ENCODE measurements at regions of chr6 and their contacts with region 1.

Region 1: GRCh38 chr6:25992413-25993037 is 29.9 kb downstream of the TRIM38 start:
- DNase-seq: peak; percentile 95
- H3K4me3 Mint-ChIP-seq: peak overlapping the region; percentile 96
- H3K27ac Mint-ChIP-seq: peak overlapping the region; percentile 89
- H3K4me1 Mint-ChIP-seq: peaks cover 18% of the 10 kb centered on the region
- H3K27me3 Mint-ChIP-seq: no peaks in the 10 kb centered on the region

Region 2: GRCh38 chr6:25717866-25718740 is 274.4 kb before region 1 on chr6:
- CTCF ChIA-PET with region 1: interaction called, 24 read pairs
- POLR2A ChIA-PET with region 1: no interaction called
- intact Hi-C with region 1: loop called (anchors 5 kb)
- DNase-seq: no peak
- H3K4me3 Mint-ChIP-seq: no peak overlapping the region
- H3K27ac Mint-ChIP-seq: no peak overlapping the region
- H3K4me1 Mint-ChIP-seq: no peaks in the 10 kb centered on the region
- H3K27me3 Mint-ChIP-seq: peaks cover 14% of the 10 kb centered on the region

Region 3: GRCh38 chr6:25962149-25963127 is 30.1 kb before region 1 on chr6 and contains the start of gene TRIM38:
- CTCF ChIA-PET with region 1: interaction called, 20 read pairs
- POLR2A ChIA-PET with region 1: interaction called, 10 read pairs
- intact Hi-C with region 1: loop called (anchors 1 kb)
- DNase-seq: peak; percentile 83
- H3K4me3 Mint-ChIP-seq: peak within 1 kb of the TSS; percentile 98
- H3K27ac Mint-ChIP-seq: peak within 1 kb of the TSS; percentile 100
- H3K4me1 Mint-ChIP-seq: peaks cover 77% of the 10 kb centered on the region
- H3K27me3 Mint-ChIP-seq: no peaks in the 10 kb centered on the region
- total RNA-seq, gene TRIM38: 29.5 to 30.8 TPM

Region 4: DNA sequence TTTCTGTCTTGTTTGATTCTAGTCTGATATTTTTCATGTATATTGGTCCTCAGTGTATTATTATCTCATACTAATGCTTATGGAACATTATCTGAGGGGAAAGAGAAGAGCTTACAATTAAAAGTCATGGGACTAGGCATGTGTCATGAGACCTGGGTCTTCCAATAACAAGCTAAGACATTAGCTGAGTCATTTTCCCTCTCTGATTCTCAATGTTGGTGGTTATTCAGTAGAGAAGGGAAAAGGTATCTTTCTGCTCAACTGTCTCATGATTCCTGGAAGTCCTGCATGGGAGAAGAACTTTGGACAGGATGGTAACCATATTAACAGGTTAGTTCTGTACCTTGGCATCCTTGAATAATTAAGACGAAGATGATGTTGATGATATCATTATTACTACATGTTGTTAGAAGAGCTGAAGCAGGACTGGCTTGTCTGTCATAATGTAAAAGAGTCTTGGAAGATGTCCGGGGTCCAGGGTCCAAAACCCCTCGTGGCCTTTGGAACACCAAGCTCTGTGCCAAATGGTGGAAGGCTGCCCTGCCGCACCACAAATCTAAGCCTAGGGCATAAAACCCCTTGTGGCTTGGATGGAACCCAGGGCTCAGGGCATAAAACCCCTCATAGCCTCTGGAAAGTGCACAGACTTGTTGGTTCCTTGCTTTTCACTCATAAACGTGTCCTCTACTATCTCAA is 10.8 kb before region 1 on chr6:
- CTCF ChIA-PET with region 1: interaction called, 23 read pairs
- POLR2A ChIA-PET with region 1: interaction called, 5 read pairs
- intact Hi-C with region 1: loop called (anchors 1 kb)
- DNase-seq: no peak
- H3K4me3 Mint-ChIP-seq: no peak overlapping the region
- H3K27ac Mint-ChIP-seq: peak overlapping the region; percentile 70
- H3K4me1 Mint-ChIP-seq: peaks cover 40% of the 10 kb centered on the region
- H3K27me3 Mint-ChIP-seq: no peaks in the 10 kb centered on the region

Region 5: GRCh38 chr6:26012061-26012460 is 19.5 kb after region 1 on chr6:
- CTCF ChIA-PET with region 1: interaction called, 76 read pairs
- POLR2A ChIA-PET with region 1: interaction called, 25 read pairs
- intact Hi-C with region 1: loop called (anchors 1 kb)
- DNase-seq: no peak
- H3K4me3 Mint-ChIP-seq: no peak overlapping the region
- H3K27ac Mint-ChIP-seq: no peak overlapping the region
- H3K4me1 Mint-ChIP-seq: peaks cover 4% of the 10 kb centered on the region
- H3K27me3 Mint-ChIP-seq: no peaks in the 10 kb centered on the region

Region 6: DNA sequence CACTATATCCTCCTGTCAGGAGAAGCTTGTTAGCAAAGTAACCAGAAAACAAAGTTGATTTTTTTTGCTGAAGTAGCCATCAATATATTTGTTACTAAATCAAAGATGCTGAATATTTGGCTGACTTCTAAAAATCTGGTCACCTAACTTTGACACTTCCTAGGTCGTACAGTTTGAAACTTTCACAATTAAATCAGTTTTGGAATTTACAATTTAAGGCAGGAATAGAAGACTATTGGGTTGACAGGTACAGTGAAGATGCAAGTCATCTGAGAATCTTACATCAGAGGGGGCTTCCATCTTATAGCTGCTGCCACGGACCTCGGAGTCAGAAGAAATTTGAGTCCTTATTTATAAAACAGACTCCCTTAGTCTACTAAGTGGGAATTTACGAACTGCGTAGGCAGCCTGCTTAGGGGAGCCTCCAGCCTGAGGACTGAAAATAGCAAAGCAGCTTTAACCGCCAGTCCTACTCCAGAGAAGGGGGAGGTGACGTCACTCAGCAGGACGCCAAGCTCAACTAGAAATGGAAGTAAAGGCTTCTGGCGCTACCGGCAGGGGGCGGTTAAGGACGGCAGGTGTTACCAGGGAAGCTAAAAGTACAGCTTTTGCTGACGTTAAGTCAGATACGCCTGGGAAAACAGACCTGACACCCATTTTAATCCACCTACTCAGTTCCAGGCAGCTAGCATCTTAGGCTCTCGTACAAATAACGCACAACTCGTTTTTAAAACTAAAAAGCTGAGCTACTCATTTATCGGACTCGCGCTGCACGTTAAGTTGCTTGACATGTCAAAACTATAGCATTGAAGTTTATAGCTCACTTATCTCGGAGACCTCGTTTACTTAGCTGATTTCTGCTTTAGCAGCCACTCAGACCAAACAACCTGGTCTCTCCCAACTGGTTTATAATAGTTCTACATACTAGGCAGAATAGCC is 33.6 kb after region 1 on chr6:
- CTCF ChIA-PET with region 1: interaction called, 43 read pairs
- POLR2A ChIA-PET with region 1: interaction called, 21 read pairs
- intact Hi-C with region 1: no loop called
- DNase-seq: peak; percentile 96
- H3K4me3 Mint-ChIP-seq: peak overlapping the region; percentile 87
- H3K27ac Mint-ChIP-seq: peak overlapping the region; percentile 91
- H3K4me1 Mint-ChIP-seq: peaks cover 53% of the 10 kb centered on the region
- H3K27me3 Mint-ChIP-seq: peaks cover 5% of the 10 kb centered on the region